ENCODE measurements at regions of chr4 and their contacts with region 1.

Region 1: DNA sequence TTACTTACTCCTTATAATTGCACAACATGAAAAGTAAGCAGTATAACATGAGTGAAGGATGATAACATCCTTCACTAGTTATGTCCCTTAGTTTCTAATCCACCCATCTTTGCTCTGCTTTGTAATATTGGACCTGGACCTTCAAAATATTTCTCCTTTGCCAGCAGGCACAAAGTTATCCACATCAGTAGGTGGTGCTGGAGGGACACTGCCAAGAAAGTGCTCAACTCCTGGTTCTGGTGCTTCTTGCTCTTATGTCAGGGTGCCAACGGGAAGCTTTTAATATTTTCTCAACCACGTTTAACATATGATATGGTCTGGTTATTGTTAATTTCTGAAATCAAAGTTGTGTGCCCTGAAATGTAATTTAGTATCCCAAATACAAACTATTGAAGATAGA is 49.1 kb downstream of the TMEM165 start:
- DNase-seq: no peak

Region 2: GRCh38 chr4:54626113-54626512 is 818.7 kb before region 1 on chr4:
- intact Hi-C with region 1: no loop called
- DNase-seq: no peak

Region 3: DNA sequence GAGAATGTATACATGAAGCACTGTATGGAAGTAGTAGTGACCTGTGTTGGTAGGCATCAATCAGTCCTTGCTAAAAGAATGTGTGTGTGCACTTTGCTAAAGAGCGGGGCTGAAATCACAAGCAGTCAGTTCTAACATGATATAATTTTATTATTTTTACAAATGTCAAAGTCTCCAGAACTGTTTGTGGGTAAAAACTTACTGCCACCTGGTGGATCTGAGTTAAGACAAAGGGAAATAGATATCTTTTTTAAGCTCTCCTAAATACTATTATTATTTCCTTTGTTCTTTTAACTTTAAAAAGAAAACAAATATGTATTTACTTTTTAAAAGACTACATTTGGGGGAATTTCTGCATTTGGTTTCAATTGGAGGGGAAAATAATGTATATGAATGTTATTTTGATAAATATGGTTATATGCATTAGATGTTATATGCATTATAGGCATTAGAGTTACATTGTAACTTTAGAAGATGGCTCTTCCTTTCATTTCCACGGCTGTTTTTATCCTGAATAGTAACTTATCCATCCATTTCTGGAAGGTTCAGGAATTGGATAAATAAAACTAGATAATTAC is 109.7 kb after region 1 on chr4:
- intact Hi-C with region 1: loop called (anchors 5 kb)
- DNase-seq: no peak